ENCODE measurements at regions of chr3 and their contacts with region 1.

Region 1: DNA sequence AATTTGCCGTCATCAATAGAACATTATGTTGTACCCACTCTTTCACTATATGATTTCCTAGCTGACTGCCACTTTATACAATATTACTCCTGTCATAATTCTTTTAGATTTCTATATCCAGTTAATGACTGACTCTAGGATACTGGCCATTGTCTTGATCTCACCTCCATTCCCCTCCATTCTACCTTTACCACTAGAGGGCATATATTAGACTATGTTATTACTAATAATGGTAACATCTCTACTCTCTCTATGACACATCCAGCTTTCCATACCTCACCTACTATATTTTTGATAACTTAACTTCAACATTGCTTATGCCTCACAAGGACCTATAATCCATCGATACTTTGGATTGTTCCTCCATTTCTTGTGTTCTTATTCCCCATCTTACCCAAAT is 31.4 kb upstream of the POU1F1 start:
- DNase-seq: no peak
- ATAC-seq: no peak
- H3K4me3 ChIP-seq: no peak overlapping the region
- H3K27ac ChIP-seq: no peak overlapping the region
- H3K4me1 ChIP-seq: no peaks in the 10 kb centered on the region
- H3K27me3 ChIP-seq: no peaks in the 10 kb centered on the region
- CTCF ChIP-seq: peak in 2 of 7 experiments; percentile 13 to 14
- POLR2A ChIP-seq: no peak

Region 2: GRCh38 chr3:87503900-87504508 is 196.2 kb after region 1 on chr3:
- intact Hi-C with region 1: loop called (anchors 10 kb)
- DNase-seq: peak; percentile 44 to 66 (median 54)
- ATAC-seq: peak; percentile 96
- H3K4me3 ChIP-seq: no peak overlapping the region
- H3K27ac ChIP-seq: no peak overlapping the region
- H3K4me1 ChIP-seq: no peaks in the 10 kb centered on the region
- H3K27me3 ChIP-seq: no peaks in the 10 kb centered on the region
- CTCF ChIP-seq: peak; percentile 59 to 93 (median 86)
- POLR2A ChIP-seq: no peak